ENCODE measurements at regions of chr3 and their contacts with region 1.

Region 1: DNA sequence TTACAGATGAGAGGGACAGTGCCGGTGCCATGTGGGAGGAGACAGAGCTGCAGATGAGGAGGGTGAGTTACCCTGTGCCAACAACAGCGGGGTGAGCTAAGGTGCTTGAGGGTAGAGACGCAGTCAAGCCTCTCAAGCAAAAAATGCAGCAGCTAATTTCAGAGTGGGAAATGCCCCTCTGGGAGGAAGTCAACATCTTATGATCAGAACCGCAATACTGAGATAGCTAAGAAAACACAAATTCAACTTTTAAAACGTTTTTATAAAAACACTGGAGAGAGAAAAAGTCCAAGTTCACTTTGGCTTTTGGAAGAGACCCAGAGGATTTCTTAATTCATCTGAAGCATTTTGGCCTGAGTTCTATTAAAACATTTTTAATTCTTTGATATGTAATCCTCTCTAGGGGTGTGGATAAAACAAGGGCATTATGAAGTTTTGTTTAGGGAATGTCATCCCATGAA is 319.2 kb downstream of the SLC9A9 start:
- DNase-seq: peak; percentile 33
- ATAC-seq: peak; percentile 98
- H3K4me3 Mint-ChIP-seq: peak overlapping the region; percentile 74
- H3K27ac Mint-ChIP-seq: peak overlapping the region; percentile 89
- H3K4me1 Mint-ChIP-seq: peaks cover 78% of the 10 kb centered on the region
- H3K27me3 Mint-ChIP-seq: no peaks in the 10 kb centered on the region
- CTCF ChIP-seq: no peak

Region 2: DNA sequence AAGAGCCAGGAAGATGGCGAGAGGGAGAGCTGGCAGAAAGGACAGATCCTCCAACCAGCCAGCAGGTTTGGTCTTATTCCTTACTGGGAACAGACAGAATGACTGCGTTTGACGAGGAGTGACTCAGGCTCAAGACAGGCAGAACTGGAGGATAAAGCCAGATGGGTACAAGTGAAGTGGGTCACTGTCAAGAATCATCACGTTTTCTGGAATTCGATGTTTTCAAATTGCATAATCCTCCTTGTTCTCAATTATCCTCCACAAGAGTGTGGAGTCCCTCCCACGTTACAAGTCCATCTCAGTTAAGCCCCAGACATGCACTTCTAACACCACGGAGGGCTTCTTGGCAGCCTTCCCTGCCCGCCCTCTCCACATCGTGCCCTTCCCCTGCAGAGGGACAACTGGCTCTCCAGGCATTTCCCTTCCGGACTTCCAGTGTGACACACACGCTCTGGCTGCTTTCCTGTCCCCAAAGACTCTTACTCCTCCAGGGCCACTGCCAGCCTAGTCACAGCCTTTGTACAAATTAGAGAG is 226.3 kb before region 1 on chr3:
- CTCF ChIA-PET with region 1: no interaction called
- POLR2A ChIA-PET with region 1: no interaction called
- intact Hi-C with region 1: no loop called
- DNase-seq: no peak
- ATAC-seq: no peak
- H3K4me3 Mint-ChIP-seq: no peak overlapping the region
- H3K27ac Mint-ChIP-seq: no peak overlapping the region
- H3K4me1 Mint-ChIP-seq: peaks cover 12% of the 10 kb centered on the region
- H3K27me3 Mint-ChIP-seq: no peaks in the 10 kb centered on the region
- CTCF ChIP-seq: no peak

Region 3: DNA sequence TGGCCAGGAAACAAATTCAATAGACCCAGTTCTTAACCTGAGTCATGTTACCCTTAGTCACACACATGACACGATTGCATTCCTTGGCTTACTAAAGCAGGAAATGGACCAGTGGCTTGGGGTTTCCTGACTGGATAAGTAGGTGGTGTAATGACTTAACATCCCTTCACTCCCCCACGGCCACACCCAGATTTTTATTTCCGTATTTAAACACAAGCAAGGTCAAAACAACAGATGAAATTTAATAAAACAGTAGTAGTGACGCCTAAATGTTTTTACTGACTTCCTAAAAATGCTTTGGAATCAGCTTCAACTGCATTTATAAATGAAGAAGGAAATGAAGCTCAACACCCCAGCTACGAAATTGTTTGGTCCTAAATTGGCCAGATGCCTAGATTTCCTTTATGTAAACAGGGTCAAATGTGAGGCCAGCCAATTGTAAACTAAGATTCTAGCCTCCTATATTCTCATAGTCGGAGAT is 85.2 kb before region 1 on chr3:
- CTCF ChIA-PET with region 1: no interaction called
- POLR2A ChIA-PET with region 1: no interaction called
- intact Hi-C with region 1: no loop called
- DNase-seq: no peak
- ATAC-seq: no peak
- H3K4me3 Mint-ChIP-seq: no peak overlapping the region
- H3K27ac Mint-ChIP-seq: peak overlapping the region; percentile 13
- H3K4me1 Mint-ChIP-seq: peaks cover 17% of the 10 kb centered on the region
- H3K27me3 Mint-ChIP-seq: no peaks in the 10 kb centered on the region
- CTCF ChIP-seq: no peak

Region 4: DNA sequence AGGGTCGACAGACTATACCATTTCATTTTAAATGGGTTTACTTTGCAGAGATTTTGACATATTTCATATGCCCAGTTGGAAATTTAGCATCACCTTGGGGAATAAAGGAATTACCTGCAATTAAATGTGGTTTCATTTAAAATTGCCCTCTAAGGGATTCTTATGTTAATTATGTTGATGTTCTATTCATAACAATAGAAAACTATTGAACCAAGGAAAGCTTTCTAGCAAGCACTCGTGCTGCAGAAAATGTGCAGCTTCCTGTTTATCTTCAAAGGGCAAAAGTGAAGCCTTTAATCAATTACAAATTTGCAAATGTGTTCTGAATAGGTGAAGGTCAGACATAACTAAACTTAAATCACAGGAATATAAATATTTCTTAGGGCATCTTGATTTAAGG is 57.3 kb before region 1 on chr3:
- CTCF ChIA-PET with region 1: no interaction called
- POLR2A ChIA-PET with region 1: no interaction called
- intact Hi-C with region 1: loop called (anchors 5 kb)
- DNase-seq: no peak
- ATAC-seq: no peak
- H3K4me3 Mint-ChIP-seq: no peak overlapping the region
- H3K27ac Mint-ChIP-seq: no peak overlapping the region
- H3K4me1 Mint-ChIP-seq: no peaks in the 10 kb centered on the region
- H3K27me3 Mint-ChIP-seq: no peaks in the 10 kb centered on the region
- CTCF ChIP-seq: no peak

Region 5: GRCh38 chr3:143595456-143596077 is 66.5 kb after region 1 on chr3:
- CTCF ChIA-PET with region 1: no interaction called
- POLR2A ChIA-PET with region 1: no interaction called
- intact Hi-C with region 1: loop called (anchors 2 kb)
- DNase-seq: no peak
- ATAC-seq: peak; percentile 95
- H3K4me3 Mint-ChIP-seq: no peak overlapping the region
- H3K27ac Mint-ChIP-seq: peak overlapping the region; percentile 13
- H3K4me1 Mint-ChIP-seq: peaks cover 14% of the 10 kb centered on the region
- H3K27me3 Mint-ChIP-seq: no peaks in the 10 kb centered on the region
- CTCF ChIP-seq: no peak

Region 6: GRCh38 chr3:143604402-143605185 is 75.5 kb after region 1 on chr3:
- CTCF ChIA-PET with region 1: no interaction called
- POLR2A ChIA-PET with region 1: interaction called, 5 read pairs
- intact Hi-C with region 1: loop called (anchors 2 kb)
- DNase-seq: no peak
- ATAC-seq: peak; percentile 74
- H3K4me3 Mint-ChIP-seq: no peak overlapping the region
- H3K27ac Mint-ChIP-seq: peak overlapping the region; percentile 84
- H3K4me1 Mint-ChIP-seq: peaks cover 31% of the 10 kb centered on the region
- H3K27me3 Mint-ChIP-seq: no peaks in the 10 kb centered on the region
- CTCF ChIP-seq: no peak

Region 7: DNA sequence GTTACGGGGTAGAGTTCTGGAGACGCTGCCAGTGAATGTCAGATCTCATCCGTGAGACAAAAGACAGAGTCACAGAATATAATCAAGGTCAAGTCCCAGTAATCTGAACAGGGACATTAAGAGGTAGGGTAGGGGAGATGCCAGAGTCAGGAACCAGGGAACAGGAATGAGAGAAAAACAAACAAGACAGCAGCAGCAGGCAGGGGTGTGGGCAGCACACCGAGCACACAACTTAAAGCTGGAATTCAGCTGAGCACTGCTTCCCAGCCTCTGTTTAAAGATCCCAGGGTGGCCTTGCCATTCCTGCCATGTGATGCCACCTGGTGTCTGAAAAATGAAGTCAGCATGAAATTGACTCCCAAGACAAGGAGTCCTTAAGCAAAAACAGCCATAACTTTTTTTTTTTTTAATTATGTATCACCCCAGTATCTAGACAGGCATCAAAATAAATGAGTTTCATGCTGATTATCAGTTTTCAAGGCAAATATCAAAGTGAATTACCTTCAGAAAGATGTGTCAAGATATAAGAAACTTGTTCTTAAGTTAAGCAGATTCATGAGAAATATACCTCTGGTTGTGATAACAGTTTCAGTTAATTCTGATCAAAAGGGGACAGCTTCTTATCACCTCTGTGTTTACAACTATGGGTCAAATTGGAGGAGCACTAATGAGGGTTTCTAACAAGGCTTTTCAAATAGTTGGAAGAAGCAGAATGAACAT is 115.5 kb after region 1 on chr3:
- CTCF ChIA-PET with region 1: interaction called, 6 read pairs
- POLR2A ChIA-PET with region 1: no interaction called
- intact Hi-C with region 1: loop called (anchors 10 kb)
- DNase-seq: no peak
- ATAC-seq: peak; percentile 45
- H3K4me3 Mint-ChIP-seq: no peak overlapping the region
- H3K27ac Mint-ChIP-seq: peak overlapping the region; percentile 50
- H3K4me1 Mint-ChIP-seq: peaks cover 14% of the 10 kb centered on the region
- H3K27me3 Mint-ChIP-seq: no peaks in the 10 kb centered on the region
- CTCF ChIP-seq: no peak